ENCODE measurements at regions of chr9 and their contacts with region 1.

Region 1: GRCh38 chr9:130682490-130683121 is 11.0 kb upstream of the EXOSC2 start:
- DNase-seq: peak; percentile 56 to 84
- H3K4me3 ChIP-seq: peak overlapping the region; percentile 43 to 62
- H3K27ac ChIP-seq: no peak overlapping the region
- H3K4me1 ChIP-seq: peaks cover 0 to 17% (median 15%) of the 10 kb centered on the region in 4 donors
- H3K27me3 ChIP-seq: peaks cover 0 to 29% of the 10 kb centered on the region in 2 donors
- CTCF ChIP-seq: peak; percentile 72 to 76

Region 2: DNA sequence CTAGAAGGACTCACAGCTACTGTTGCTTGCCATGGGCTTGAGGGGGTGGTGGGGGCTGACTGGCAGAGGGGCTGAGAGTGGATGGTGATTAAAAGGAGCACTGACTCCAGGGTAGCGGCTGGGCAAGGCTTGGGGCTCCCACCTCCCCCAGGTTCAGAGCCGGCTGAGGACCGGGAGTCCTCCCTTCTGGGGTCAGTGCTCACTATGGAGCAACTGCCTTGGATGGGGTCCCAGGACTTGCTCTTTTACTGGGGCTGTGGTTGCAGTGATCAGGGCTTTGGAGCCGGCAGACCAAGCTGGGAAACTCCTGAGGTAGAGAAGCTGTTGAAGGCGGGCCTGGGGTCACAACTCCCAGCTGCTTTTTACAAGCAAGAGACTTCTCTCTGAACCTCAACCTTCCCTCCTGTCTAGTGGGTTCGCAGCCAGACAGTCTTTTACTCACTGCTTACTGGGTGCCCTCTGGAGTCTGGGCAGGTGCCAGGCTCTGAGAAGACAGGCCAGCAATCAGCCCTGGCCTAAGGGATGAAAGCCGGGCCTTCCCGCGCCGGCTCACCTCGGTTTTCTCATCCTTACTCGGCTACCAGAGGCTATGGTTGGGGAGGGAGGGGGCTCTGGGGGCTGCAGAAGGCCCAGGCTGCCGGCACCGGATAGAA is 238.6 kb before region 1 on chr9:
- intact Hi-C with region 1: no loop called
- DNase-seq: peak in 1 of 2 donors; percentile 64
- H3K4me3 ChIP-seq: peak overlapping the region; percentile 57 to 80
- H3K27ac ChIP-seq: peak overlapping the region; percentile 73 to 79
- H3K4me1 ChIP-seq: peaks cover 0 to 41% (median 33%) of the 10 kb centered on the region in 4 donors
- H3K27me3 ChIP-seq: no peaks in the 10 kb centered on the region
- CTCF ChIP-seq: no peak

Region 3: DNA sequence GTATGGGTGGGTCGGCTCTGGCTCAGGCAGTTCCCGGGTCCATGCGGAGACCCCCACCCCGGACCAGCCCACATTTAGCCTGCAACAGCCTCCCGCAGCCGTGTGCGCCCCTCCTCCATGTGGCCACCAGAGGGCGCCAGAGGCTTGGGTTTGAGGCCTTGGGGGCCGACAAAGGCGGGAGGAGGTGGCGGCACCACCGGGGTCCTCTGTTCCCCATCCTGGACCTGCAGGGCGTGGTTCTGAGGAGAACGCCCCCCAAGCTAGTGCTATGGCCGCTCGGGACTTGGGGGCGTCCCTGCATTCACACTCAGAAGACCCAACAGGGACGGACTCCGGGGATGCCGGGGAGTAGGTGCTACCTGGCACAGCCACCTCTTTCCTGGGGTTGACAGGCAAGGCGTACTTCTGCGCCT is 221.4 kb before region 1 on chr9:
- intact Hi-C with region 1: loop called (anchors 5 kb)
- DNase-seq: no peak
- H3K4me3 ChIP-seq: no peak overlapping the region
- H3K27ac ChIP-seq: no peak overlapping the region
- H3K4me1 ChIP-seq: no peaks in the 10 kb centered on the region
- H3K27me3 ChIP-seq: no peaks in the 10 kb centered on the region
- CTCF ChIP-seq: peak; percentile 89 to 91

Region 4: DNA sequence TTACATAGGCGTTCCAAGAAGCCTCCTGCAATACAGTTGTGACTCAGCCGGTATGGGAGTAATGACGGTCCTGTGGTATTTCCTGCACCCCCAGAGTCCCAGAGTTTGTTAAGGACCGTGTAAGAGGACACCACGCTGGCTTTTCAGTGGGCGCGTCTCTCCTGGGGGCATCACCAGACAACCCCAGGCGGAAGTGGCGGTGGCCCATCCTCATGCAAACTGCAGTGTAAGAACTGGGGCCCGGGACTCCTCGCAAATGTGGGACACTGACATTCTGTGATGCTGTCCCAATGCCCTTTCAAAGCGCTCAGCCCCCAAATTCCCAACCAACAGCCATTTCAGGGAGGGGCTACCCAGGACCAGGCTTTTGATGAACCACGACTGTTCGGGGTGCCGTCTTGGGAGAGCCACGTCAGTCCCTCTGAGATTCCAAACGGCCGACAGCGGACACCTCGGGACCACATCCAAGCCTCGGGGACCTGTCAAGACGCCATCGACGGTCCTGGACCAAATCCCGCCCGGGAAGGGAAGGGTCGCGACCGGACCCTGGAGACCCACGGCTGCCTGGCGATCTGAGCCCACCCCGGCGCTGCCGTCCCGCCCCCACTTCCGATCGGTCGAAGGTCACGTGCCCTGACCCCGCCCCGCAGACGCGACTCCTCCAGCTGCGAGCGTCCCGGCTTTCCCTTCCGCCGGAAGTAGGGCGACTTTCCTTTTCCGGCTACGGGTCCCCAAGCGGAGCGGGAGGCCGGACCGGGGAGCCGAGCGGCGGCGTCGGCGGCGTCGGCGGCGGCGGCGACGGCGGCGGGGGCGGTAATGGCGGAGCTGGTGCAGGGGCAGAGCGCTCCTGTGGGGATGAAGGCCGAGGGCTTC is 103.5 kb before region 1 on chr9 and contains the start of gene FUBP3:
- intact Hi-C with region 1: loop called (anchors 10 kb)
- DNase-seq: peak; percentile 92 to 96
- H3K4me3 ChIP-seq: peak within 1 kb of the TSS; percentile 84 to 97
- H3K27ac ChIP-seq: peak within 1 kb of the TSS; percentile 86 to 87
- H3K4me1 ChIP-seq: peaks cover 0 to 35% (median 27%) of the 10 kb centered on the region in 4 donors
- H3K27me3 ChIP-seq: no peaks in the 10 kb centered on the region
- CTCF ChIP-seq: no peak

Measured in tibial artery (tissue), 4 donors.